Activated CD4-positive, alpha-beta T cell treated with anti-CD3 and anti-CD28 coated beads, Interleukin-2, amount 10 ng/mL, durations not matched to agents 7 days and 5 days (primary cell): ENCODE measurements at regions of chr12 and their contacts with region 1.

Region 1: GRCh38 chr12:47293406-47293805 is 213.6 kb upstream of the AMIGO2 start:
- DNase-seq: no peak
- H3K4me3 Mint-ChIP-seq: no peak overlapping the region
- H3K27ac Mint-ChIP-seq: no peak overlapping the region
- H3K4me1 Mint-ChIP-seq: peaks cover 19% of the 10 kb centered on the region
- H3K27me3 Mint-ChIP-seq: no peaks in the 10 kb centered on the region

Region 2: DNA sequence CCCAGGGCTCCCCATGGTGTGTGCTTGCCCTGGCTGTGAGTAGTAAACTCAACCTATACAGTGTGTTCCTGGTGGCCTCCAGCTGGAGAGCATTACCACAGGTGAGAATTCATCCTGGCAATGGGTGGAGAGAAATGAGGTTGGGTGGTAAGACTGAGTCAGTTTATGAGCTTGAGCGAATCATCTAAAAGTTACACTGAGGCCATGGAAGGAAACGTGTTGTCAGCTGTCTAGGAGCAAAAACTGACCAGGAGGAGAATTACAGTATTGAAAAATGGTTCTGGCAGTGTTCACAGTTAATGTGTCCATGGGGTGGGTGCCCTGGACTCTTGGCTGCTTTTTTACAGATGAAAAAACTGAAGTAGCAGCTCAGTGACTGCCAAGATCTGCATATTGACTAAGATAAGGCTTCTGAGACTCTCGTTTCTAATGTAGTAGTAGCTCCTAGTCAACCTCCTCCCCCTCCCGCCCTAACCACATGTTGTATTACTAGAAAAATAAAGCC is 11.7 kb before region 1 on chr12:
- CTCF ChIA-PET with region 1: interaction called, 10 read pairs
- POLR2A ChIA-PET with region 1: no interaction called
- DNase-seq: no peak
- H3K4me3 Mint-ChIP-seq: no peak overlapping the region
- H3K27ac Mint-ChIP-seq: no peak overlapping the region
- H3K4me1 Mint-ChIP-seq: peaks cover 49% of the 10 kb centered on the region
- H3K27me3 Mint-ChIP-seq: no peaks in the 10 kb centered on the region

Region 3: GRCh38 chr12:47356129-47356700 is 62.8 kb after region 1 on chr12:
- CTCF ChIA-PET with region 1: no interaction called
- POLR2A ChIA-PET with region 1: no interaction called
- DNase-seq: no peak
- H3K4me3 Mint-ChIP-seq: peak overlapping the region; percentile 21
- H3K27ac Mint-ChIP-seq: peak overlapping the region; percentile 92
- H3K4me1 Mint-ChIP-seq: peaks cover 70% of the 10 kb centered on the region
- H3K27me3 Mint-ChIP-seq: no peaks in the 10 kb centered on the region

Region 4: GRCh38 chr12:47449797-47450196 is 156.4 kb after region 1 on chr12:
- CTCF ChIA-PET with region 1: no interaction called
- POLR2A ChIA-PET with region 1: no interaction called
- DNase-seq: no peak
- H3K4me3 Mint-ChIP-seq: no peak overlapping the region
- H3K27ac Mint-ChIP-seq: no peak overlapping the region
- H3K4me1 Mint-ChIP-seq: no peaks in the 10 kb centered on the region
- H3K27me3 Mint-ChIP-seq: peaks cover 1% of the 10 kb centered on the region